Activated naive CD8-positive, alpha-beta T cell treated with anti-CD3 and anti-CD28 coated beads, Interleukin-2, amount 10 ng/mL, durations not matched to agents 7 days and 5 days (primary cell): ENCODE measurements at regions of chr12 and their contacts with region 1.

Region 1: GRCh38 chr12:642633-643474 is 20.4 kb downstream of the NINJ2 start:
- DNase-seq: peak; percentile 92
- ATAC-seq: peak; percentile 88
- H3K4me3 Mint-ChIP-seq: peak overlapping the region; percentile 73
- H3K27ac Mint-ChIP-seq: peak overlapping the region; percentile 91
- H3K4me1 Mint-ChIP-seq: peaks cover 62% of the 10 kb centered on the region
- H3K27me3 Mint-ChIP-seq: no peaks in the 10 kb centered on the region

Region 2: DNA sequence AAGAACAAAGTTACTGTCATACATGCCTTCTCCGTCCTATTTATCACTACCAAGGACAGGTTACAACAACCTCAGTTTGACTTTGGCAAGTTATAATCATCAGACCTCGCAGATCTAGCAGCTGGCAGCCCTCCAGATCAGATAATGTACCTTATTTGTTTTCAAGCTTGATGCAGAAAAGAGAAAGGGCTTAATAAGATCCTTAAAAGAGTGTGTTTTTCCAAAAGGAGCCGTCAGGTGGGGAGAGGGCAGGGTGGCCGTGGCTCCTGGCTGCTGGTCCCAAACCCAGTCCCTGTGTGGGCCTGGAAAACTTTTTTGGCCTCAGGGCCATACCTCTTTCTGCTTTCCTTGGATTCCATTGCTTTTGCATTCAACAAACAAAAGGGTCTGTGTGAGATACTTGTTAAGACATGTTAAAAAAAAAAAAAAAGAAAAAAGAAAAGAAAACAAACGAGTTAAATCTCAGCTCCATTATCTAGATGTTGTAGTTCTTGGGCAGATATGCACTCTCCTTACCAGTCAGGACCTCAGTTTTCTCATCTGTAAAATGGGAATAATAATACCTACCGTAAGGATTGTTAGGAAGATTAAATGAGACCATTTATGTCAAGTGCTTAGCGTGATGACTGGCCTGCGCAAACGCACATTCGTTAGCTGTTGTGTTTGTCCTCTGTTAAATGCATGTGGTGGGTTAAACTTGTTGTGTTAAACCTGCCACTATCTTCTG is 118.5 kb before region 1 on chr12:
- POLR2A ChIA-PET with region 1: no interaction called
- DNase-seq: no peak
- ATAC-seq: no peak
- H3K4me3 Mint-ChIP-seq: no peak overlapping the region
- H3K27ac Mint-ChIP-seq: no peak overlapping the region
- H3K4me1 Mint-ChIP-seq: peaks cover 1% of the 10 kb centered on the region
- H3K27me3 Mint-ChIP-seq: peaks cover 10% of the 10 kb centered on the region

Region 3: GRCh38 chr12:622416-622815 is 20.4 kb before region 1 on chr12:
- POLR2A ChIA-PET with region 1: interaction called, 15 read pairs
- DNase-seq: no peak
- ATAC-seq: peak; percentile 59
- H3K4me3 Mint-ChIP-seq: peak overlapping the region; percentile 56
- H3K27ac Mint-ChIP-seq: peak overlapping the region; percentile 87
- H3K4me1 Mint-ChIP-seq: peaks cover 44% of the 10 kb centered on the region
- H3K27me3 Mint-ChIP-seq: no peaks in the 10 kb centered on the region